Caco-2 (cell line): ENCODE measurements at regions of chr7 and their contacts with region 1.

Region 1: GRCh38 chr7:157273208-157274093 is 63.4 kb upstream of the DNAJB6 start:
- DNase-seq: peak; percentile 68 to 84
- H3K4me3 ChIP-seq: no peak overlapping the region
- H3K4me3 Mint-ChIP-seq: no peak overlapping the region
- H3K27ac Mint-ChIP-seq: peak overlapping the region; percentile 53
- H3K4me1 ChIP-seq: 0 out of 2 replicates have a peak, but pooled peaks cover 5% of the 10 kb centered on the region
- H3K4me1 Mint-ChIP-seq: peaks cover 9% of the 10 kb centered on the region
- H3K27me3 ChIP-seq: no peaks in the 10 kb centered on the region
- H3K27me3 Mint-ChIP-seq: no peaks in the 10 kb centered on the region
- CTCF ChIP-seq: peak; percentile 97 to 98

Region 2: GRCh38 chr7:157228864-157229422 is 44.5 kb before region 1 on chr7:
- CTCF ChIA-PET with region 1: no interaction called
- POLR2A ChIA-PET with region 1: no interaction called
- intact Hi-C with region 1: loop called (anchors 5 kb)
- DNase-seq: peak; percentile 48 to 53
- H3K4me3 ChIP-seq: no peak overlapping the region
- H3K4me3 Mint-ChIP-seq: no peak overlapping the region
- H3K27ac Mint-ChIP-seq: no peak overlapping the region
- H3K4me1 ChIP-seq: no peaks in the 10 kb centered on the region
- H3K4me1 Mint-ChIP-seq: no peaks in the 10 kb centered on the region
- H3K27me3 ChIP-seq: no peaks in the 10 kb centered on the region
- H3K27me3 Mint-ChIP-seq: no peaks in the 10 kb centered on the region
- CTCF ChIP-seq: peak in 1 of 2 experiments; percentile 56

Region 3: GRCh38 chr7:157336383-157337315 is 63.2 kb after region 1 on chr7 and contains the start of gene DNAJB6:
- CTCF ChIA-PET with region 1: no interaction called
- POLR2A ChIA-PET with region 1: interaction called, 3 read pairs
- intact Hi-C with region 1: loop called (anchors 1 kb)
- DNase-seq: peak; percentile 92 to 95
- H3K4me3 ChIP-seq: peak within 1 kb of the TSS; percentile 80
- H3K4me3 Mint-ChIP-seq: peak within 1 kb of the TSS; percentile 93
- H3K27ac Mint-ChIP-seq: peak within 1 kb of the TSS; percentile 91
- H3K4me1 ChIP-seq: peaks cover 6% of the 10 kb centered on the region
- H3K4me1 Mint-ChIP-seq: peaks cover 15% of the 10 kb centered on the region
- H3K27me3 ChIP-seq: no peaks in the 10 kb centered on the region
- H3K27me3 Mint-ChIP-seq: no peaks in the 10 kb centered on the region
- CTCF ChIP-seq: no peak
- total RNA-seq, gene DNAJB6: 108 and 113 TPM in 2 replicates

Region 4: DNA sequence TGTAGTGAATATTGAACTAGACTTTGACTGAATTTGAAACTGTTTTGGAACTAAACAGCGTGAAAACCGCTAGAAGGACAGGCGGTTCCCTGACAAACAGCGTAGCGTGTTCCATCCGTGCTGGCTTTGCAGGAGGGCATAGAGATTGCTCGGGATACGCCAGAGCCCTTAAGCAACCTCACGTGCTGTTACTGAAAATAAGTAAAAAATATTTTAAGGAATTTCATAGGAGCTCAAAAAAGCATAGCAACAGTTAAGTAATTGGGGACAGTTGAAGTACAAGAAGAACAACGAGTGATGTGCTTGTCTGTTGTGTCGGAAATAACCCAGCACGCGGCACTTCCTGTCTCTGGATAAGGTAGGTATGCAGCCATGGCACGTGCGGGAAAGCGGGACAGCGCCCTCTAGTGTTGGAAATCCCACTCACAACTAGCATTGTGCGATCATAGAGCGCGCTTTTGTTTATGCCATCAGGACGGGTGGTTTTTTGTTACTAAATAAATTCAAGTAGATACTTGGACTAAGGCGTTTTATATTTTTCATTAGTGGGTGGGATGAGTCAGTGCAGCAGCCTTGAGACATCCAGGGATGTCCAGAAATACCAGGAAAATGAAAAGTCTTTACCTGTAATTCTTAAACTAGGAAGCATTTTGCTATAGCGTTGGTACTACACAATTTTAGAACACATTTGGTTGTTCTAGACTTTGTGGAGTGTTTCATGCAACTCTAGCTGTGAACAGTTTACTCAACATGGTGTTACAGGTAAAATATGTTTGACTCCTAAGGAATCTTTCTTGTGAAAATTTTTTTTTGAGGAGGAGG is 113.7 kb after region 1 on chr7:
- CTCF ChIA-PET with region 1: interaction called, 3 read pairs
- POLR2A ChIA-PET with region 1: no interaction called
- intact Hi-C with region 1: loop called (anchors 2 kb)
- DNase-seq: peak; percentile 81 to 82
- H3K4me3 ChIP-seq: no peak overlapping the region
- H3K4me3 Mint-ChIP-seq: no peak overlapping the region
- H3K27ac Mint-ChIP-seq: no peak overlapping the region
- H3K4me1 ChIP-seq: 0 out of 2 replicates have a peak, but pooled peaks cover 3% of the 10 kb centered on the region
- H3K4me1 Mint-ChIP-seq: peaks cover 7% of the 10 kb centered on the region
- H3K27me3 ChIP-seq: no peaks in the 10 kb centered on the region
- H3K27me3 Mint-ChIP-seq: no peaks in the 10 kb centered on the region
- CTCF ChIP-seq: peak; percentile 81 to 88

Region 5: GRCh38 chr7:157432957-157433576 is 159.6 kb after region 1 on chr7:
- CTCF ChIA-PET with region 1: no interaction called
- POLR2A ChIA-PET with region 1: no interaction called
- intact Hi-C with region 1: no loop called
- DNase-seq: peak; percentile 35 to 44
- H3K4me3 ChIP-seq: no peak overlapping the region
- H3K4me3 Mint-ChIP-seq: peak overlapping the region; percentile 50
- H3K27ac Mint-ChIP-seq: no peak overlapping the region
- H3K4me1 ChIP-seq: no peaks in the 10 kb centered on the region
- H3K4me1 Mint-ChIP-seq: peaks cover 14% of the 10 kb centered on the region
- H3K27me3 ChIP-seq: no peaks in the 10 kb centered on the region
- H3K27me3 Mint-ChIP-seq: no peaks in the 10 kb centered on the region
- CTCF ChIP-seq: peak; percentile 53 to 72